Activated CD4-positive, alpha-beta T cell treated with anti-CD3 and anti-CD28 coated beads for 36 hours (primary cell): ENCODE measurements at regions of chr19 and their contacts with region 1.

Region 1: GRCh38 chr19:41753936-41754529 is 1.3 kb upstream of the CEACAM6 start:
- DNase-seq: peak; percentile 83
- ATAC-seq: peak; percentile 90
- H3K4me3 Mint-ChIP-seq: no peak overlapping the region
- H3K27ac Mint-ChIP-seq: no peak overlapping the region
- H3K4me1 Mint-ChIP-seq: peaks cover 7% of the 10 kb centered on the region
- H3K27me3 Mint-ChIP-seq: peaks cover 32% of the 10 kb centered on the region

Region 2: GRCh38 chr19:41588497-41589209 is 165.4 kb before region 1 on chr19:
- CTCF ChIA-PET with region 1: no interaction called
- POLR2A ChIA-PET with region 1: no interaction called
- intact Hi-C with region 1: no loop called
- DNase-seq: peak; percentile 58
- ATAC-seq: no peak
- H3K4me3 Mint-ChIP-seq: no peak overlapping the region
- H3K27ac Mint-ChIP-seq: no peak overlapping the region
- H3K4me1 Mint-ChIP-seq: no peaks in the 10 kb centered on the region
- H3K27me3 Mint-ChIP-seq: no peaks in the 10 kb centered on the region

Region 3: DNA sequence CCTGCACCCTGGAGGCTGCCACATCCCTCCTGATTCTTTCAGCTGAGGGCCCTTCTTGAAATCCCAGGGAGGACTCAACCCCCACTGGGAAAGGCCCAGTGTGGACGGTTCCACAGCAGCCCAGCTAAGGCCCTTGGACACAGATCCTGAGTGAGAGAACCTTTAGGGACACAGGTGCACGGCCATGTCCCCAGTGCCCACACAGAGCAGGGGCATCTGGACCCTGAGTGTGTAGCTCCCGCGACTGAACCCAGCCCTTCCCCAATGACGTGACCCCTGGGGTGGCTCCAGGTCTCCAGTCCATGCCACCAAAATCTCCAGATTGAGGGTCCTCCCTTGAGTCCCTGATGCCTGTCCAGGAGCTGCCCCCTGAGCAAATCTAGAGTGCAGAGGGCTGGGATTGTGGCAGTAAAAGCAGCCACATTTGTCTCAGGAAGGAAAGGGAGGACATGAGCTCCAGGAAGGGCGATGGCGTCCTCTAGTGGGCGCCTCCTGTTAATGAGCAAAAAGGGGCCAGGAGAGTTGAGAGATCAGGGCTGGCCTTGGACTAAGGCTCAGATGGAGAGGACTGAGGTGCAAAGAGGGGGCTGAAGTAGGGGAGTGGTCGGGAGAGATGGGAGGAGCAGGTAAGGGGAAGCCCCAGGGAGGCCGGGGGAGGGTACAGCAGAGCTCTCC is 52.5 kb before region 1 on chr19:
- CTCF ChIA-PET with region 1: interaction called, 13 read pairs
- POLR2A ChIA-PET with region 1: no interaction called
- intact Hi-C with region 1: no loop called
- DNase-seq: peak; percentile 53
- ATAC-seq: no peak
- H3K4me3 Mint-ChIP-seq: no peak overlapping the region
- H3K27ac Mint-ChIP-seq: no peak overlapping the region
- H3K4me1 Mint-ChIP-seq: peaks cover 3% of the 10 kb centered on the region
- H3K27me3 Mint-ChIP-seq: peaks cover 18% of the 10 kb centered on the region

Region 4: DNA sequence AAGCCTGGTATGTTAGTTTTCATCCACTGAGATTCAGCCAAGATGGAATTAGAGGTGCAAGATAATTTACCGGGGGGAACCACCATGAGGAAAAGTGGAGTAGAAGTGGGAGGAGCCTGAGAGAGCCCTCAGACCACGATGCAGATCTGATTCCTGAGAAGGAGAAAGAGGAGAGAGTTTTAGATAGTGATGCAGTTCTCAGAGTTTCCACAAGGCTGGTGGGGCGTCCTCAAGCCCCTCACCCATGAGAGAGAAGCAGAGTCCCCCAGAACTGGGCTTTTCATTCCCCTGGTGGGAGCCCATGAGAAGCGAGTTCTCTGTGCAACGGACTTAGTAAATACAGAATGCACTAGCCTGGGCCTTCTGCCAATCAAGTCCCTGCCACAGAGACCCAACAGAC is 27.5 kb before region 1 on chr19:
- CTCF ChIA-PET with region 1: interaction called, 12 read pairs
- POLR2A ChIA-PET with region 1: interaction called, 3 read pairs
- intact Hi-C with region 1: no loop called
- DNase-seq: no peak
- ATAC-seq: no peak
- H3K4me3 Mint-ChIP-seq: no peak overlapping the region
- H3K27ac Mint-ChIP-seq: no peak overlapping the region
- H3K4me1 Mint-ChIP-seq: no peaks in the 10 kb centered on the region
- H3K27me3 Mint-ChIP-seq: peaks cover 43% of the 10 kb centered on the region

Region 5: DNA sequence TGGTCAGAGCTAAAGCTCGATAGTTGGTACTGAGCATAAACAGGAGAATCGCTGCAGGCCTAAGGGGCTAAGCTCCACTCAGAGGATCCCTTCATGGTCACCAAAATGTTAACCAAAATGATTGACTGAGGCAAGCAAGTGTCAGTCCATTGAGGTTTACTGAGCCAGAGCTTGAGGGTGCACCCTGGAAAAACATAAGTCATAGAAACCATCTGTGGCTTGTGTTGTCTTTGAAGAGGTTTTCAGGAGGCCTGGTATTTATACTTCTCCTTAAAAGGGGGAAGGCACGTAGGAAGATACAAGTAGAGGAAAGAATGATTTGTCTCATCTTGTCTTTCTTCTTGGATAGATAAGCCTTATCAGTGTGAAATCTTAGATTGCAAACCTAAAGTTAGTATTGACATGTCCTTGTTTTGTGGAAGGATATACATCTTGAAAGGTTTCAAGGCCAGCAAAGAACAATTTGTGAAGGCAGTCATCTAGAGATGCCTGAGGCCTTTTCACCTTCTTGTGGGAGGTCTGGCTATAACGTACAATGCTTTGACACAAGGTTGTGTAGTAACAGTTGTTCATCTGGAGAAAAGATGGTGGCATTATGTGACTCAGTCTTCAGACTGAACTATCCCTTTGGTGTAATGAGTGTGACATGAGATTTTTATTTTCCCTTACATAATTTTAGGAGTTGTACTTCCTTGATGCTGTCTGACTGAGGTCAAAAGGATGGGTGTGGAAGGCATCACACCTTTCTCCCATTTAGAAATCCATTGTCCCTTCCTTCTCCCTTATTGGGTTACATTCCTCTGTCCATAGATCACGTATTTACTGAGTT is 13.4 kb before region 1 on chr19:
- CTCF ChIA-PET with region 1: interaction called, 30 read pairs
- POLR2A ChIA-PET with region 1: no interaction called
- intact Hi-C with region 1: no loop called
- DNase-seq: peak; percentile 37
- ATAC-seq: peak; percentile 91
- H3K4me3 Mint-ChIP-seq: no peak overlapping the region
- H3K27ac Mint-ChIP-seq: no peak overlapping the region
- H3K4me1 Mint-ChIP-seq: peaks cover 21% of the 10 kb centered on the region
- H3K27me3 Mint-ChIP-seq: peaks cover 42% of the 10 kb centered on the region

Region 6: DNA sequence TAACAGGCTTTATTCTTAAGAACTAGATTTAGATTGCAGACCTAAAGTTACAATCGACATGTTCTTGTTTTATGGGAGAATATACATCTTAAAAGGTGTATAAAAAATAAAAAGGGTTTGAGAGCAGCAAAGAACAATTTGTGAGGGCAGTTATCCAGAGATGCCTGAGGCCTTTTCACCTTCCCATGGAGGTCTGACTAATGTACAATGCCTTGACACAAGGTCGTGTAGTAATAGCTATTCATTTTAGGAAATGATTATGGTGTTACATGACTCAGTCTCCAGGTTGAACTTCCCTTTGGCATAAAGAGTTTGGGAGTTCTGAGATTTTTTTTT is 21.3 kb after region 1 on chr19:
- CTCF ChIA-PET with region 1: interaction called, 98 read pairs
- POLR2A ChIA-PET with region 1: interaction called, 6 read pairs
- intact Hi-C with region 1: no loop called
- DNase-seq: no peak
- ATAC-seq: no peak
- H3K4me3 Mint-ChIP-seq: no peak overlapping the region
- H3K27ac Mint-ChIP-seq: no peak overlapping the region
- H3K4me1 Mint-ChIP-seq: peaks cover 33% of the 10 kb centered on the region
- H3K27me3 Mint-ChIP-seq: peaks cover 68% of the 10 kb centered on the region

Region 7: DNA sequence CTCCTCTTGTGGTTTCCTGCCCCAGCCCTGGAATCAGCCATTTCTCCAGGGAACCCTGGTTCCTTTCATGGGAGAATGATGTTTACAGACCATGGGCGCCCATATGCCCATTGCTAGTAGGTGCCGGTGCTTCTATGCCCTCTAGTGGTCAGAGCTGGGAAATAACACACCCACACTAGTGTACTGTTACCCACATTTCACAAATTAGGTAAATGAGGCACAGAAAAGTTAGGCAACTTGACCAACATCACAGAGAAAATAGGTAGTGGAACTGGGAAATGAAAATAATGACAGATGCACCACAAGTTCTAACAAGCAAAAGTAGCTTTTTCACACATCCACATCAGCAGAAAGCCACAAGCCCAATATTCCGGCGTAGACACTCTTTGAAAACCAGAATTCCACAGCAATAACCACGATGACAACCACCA is 41.0 kb after region 1 on chr19:
- CTCF ChIA-PET with region 1: interaction called, 88 read pairs
- POLR2A ChIA-PET with region 1: no interaction called
- intact Hi-C with region 1: no loop called
- DNase-seq: peak; percentile 77
- ATAC-seq: peak; percentile 94
- H3K4me3 Mint-ChIP-seq: no peak overlapping the region
- H3K27ac Mint-ChIP-seq: no peak overlapping the region
- H3K4me1 Mint-ChIP-seq: no peaks in the 10 kb centered on the region
- H3K27me3 Mint-ChIP-seq: peaks cover 23% of the 10 kb centered on the region